ENCODE measurements at regions of chr12 and their contacts with region 1.

Region 1: GRCh38 chr12:9647825-9648700 is 21.4 kb upstream of the CLEC2D start:
- DNase-seq: peak; percentile 97
- ATAC-seq: peak; percentile 77
- H3K4me3 Mint-ChIP-seq: peak overlapping the region; percentile 95
- H3K27ac Mint-ChIP-seq: peak overlapping the region; percentile 94
- H3K4me1 Mint-ChIP-seq: peaks cover 59% of the 10 kb centered on the region
- H3K27me3 Mint-ChIP-seq: peaks cover 2% of the 10 kb centered on the region

Region 2: DNA sequence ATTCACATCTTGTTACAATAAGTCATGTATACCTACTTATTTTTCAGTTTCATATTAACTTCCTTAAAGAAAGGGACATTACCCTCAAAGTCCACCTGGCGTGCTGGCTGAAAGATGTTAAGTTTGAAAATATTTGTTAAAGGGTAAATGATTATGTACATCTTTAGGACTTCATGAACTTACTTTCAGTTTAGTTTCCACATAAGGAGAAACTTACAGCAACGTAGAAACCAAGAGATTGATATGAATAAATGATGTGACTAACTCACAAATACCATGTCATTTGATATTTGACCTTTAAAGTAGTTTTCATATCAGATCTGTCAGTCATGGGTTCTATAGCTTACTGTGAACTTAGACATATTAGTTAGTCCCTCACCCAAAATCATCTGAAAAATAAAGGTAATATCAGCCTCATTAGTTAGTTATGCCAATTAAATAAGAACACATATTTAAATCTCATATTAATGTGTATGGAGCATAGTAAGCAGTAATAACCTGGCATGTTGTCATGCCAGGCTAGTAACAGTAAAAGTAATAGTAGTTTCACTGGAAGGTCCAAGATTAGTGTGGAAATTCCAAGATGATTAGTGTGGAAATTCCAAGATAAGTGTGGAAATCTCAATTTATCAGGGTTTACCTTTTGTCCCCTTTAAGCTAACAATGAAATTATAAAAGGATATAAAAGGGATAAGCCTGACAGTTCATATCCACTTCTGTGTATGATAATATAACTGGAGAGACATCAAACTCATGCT is 19.5 kb after region 1 on chr12:
- CTCF ChIA-PET with region 1: interaction called, 33 read pairs
- DNase-seq: no peak
- ATAC-seq: peak; percentile 22
- H3K4me3 Mint-ChIP-seq: peak overlapping the region; percentile 95
- H3K27ac Mint-ChIP-seq: peak overlapping the region; percentile 99
- H3K4me1 Mint-ChIP-seq: peaks cover 58% of the 10 kb centered on the region
- H3K27me3 Mint-ChIP-seq: no peaks in the 10 kb centered on the region

Region 3: DNA sequence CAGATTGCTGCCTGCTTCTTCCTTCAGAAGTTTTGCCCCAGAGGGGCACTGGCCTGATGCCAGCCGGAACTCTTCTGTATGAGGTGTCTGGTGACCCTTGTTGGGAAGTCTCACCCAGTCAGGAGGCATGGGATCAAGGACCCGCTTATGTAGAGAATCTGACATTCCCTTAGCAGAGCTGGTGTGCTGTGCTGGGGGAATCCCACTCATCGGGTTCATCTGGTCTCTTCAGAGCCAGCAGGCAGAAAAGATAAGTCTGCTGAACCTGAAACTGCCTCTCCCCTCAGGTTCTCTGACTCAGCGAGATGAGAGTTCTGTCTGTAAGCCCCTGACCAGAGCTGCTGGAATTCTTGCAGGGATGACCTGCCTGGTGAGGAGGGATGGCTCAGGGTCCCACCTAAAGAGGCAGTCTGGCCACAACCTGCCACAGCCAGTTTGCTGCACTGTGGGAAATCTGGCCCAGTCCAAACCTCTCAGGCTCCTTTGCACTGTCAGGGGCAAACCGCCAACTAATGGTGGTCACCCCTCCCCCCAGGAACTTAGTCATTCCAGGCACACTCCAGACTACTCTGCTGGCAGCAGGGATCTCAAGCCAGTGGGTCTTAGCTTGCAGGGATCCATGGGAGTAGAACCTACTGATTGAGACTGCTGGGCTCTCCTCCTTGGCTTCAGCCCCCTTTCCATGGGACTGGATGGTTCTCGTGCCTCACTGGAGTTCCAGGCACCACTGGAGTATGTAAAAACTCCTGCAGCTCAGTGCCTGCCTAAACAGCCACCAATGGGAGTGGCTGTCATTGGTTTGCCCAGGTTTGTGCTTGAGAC is 25.6 kb after region 1 on chr12:
- CTCF ChIA-PET with region 1: interaction called, 33 read pairs
- DNase-seq: peak; percentile 91
- ATAC-seq: peak; percentile 37
- H3K4me3 Mint-ChIP-seq: peak overlapping the region; percentile 95
- H3K27ac Mint-ChIP-seq: peak overlapping the region; percentile 99
- H3K4me1 Mint-ChIP-seq: peaks cover 51% of the 10 kb centered on the region
- H3K27me3 Mint-ChIP-seq: no peaks in the 10 kb centered on the region

Region 4: GRCh38 chr12:9719790-9720189 is 71.7 kb after region 1 on chr12:
- CTCF ChIA-PET with region 1: no interaction called
- DNase-seq: no peak
- ATAC-seq: peak; percentile 60
- H3K4me3 Mint-ChIP-seq: no peak overlapping the region
- H3K27ac Mint-ChIP-seq: peak overlapping the region; percentile 8
- H3K4me1 Mint-ChIP-seq: peaks cover 15% of the 10 kb centered on the region
- H3K27me3 Mint-ChIP-seq: no peaks in the 10 kb centered on the region

Measured in activated CD8-positive, alpha-beta memory T cell treated with anti-CD3 and anti-CD28 coated beads, Interleukin-2, amount 10 ng/mL, durations not matched to agents 7 days and 5 days (primary cell).